Mucosa of descending colon (tissue), 3 donors: ENCODE measurements at regions of chr1 and their contacts with region 1.

Region 1: GRCh38 chr1:208652296-208653160 is 408.3 kb upstream of the PLXNA2 start:
- DNase-seq: peak in 2 of 3 donors; percentile 40 to 68
- ATAC-seq: peak; percentile 93
- H3K4me3 ChIP-seq: no peak overlapping the region
- H3K4me1 ChIP-seq: no peaks in the 10 kb centered on the region
- CTCF ChIP-seq: peak; percentile 49

Region 2: DNA sequence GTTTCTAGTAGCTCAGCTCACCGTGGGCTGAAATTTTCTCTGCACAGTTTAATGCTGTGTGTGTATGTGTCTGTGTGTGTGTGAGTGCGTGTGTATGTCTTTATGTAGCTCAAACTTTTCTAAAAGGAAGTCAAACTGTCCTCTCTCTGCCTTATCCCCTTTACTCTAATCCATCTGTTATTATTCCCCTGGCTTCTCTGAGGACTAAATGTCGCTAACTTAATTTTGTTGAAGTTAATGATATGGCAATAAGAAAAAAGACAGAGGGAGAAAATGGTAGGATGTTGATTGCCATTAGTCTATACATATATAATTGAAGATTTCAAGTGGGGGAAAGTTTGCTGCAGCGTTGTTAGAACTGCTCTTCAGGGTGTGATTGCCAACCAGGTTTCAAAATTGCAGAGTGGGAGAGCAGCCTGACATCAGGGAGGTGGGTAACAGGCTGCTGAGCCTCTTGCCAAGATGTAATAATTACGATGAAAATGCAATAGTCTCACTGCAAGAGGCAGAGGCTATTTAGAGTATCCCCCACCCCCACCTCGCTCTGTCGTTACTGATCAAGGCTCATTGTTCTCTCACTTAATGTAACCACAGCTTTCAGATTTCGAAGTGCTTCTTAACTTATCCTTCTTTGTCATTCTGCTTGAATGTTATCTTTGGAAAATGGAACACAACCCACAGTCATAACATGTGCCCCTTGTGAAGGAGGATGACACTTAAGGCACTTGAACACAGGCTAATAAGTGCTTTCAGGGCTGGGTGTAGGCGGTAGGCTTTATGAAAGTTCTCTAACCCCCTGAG is 150.7 kb after region 1 on chr1:
- intact Hi-C with region 1: no loop called
- DNase-seq: no peak
- ATAC-seq: no peak
- H3K4me3 ChIP-seq: no peak overlapping the region
- H3K4me1 ChIP-seq: no peaks in the 10 kb centered on the region
- CTCF ChIP-seq: no peak

Region 3: GRCh38 chr1:209207701-209208286 is 555.3 kb after region 1 on chr1:
- intact Hi-C with region 1: loop called in 1 of 2 experiments (anchors 5 kb)
- DNase-seq: peak; percentile 53 to 76 (median 73)
- ATAC-seq: peak; percentile 81
- H3K4me3 ChIP-seq: no peak overlapping the region
- H3K4me1 ChIP-seq: peaks cover 11% of the 10 kb centered on the region
- CTCF ChIP-seq: peak; percentile 34